SK-N-SH (cell line): ENCODE measurements at regions of chr16 and their contacts with region 1.

Region 1: DNA sequence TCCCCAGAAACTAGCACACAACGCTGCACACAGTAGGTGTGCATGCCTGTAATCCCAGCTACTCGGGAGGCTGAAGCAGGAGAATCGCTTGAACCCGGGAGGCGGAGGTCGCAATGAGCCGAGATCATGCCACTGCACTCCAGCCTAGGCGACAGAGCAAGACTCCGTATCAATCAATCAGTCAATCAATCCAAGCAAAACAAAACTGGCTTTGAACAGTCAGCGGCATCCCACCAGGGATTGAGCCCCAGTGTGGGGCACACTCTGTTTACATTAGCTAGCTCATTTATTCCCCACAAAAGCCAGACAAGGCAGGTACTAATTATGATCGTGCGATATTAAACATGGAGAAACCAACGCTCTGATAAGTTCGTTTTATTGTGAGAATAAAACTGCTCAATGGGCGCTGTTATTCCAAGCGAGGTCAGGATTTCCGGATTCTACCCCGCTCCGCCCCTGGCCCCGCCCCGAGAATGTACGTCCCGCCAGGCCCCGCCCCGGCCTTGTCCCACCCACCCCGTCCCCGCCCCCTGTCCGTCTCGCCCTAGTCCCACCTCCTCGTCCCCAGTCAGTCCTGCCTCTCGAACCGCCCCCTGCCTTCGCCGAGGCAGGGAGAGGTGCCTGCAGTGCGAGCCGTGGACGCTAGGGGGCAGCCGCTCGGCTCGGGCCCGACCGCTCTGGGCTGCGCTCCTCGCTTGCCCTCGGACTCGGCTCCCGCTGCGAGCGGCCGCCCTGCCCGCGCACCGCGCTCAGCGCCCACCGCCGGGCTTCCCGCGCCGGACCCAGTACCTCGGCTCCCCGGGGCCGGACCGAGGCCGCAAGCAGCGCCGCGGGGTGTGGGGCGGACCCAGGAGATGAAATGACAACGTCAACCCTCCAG is at the start of gene VPS4A:
- DNase-seq: peak; percentile 99
- H3K4me3 ChIP-seq: peak within 1 kb of the TSS; percentile 76 to 85
- H3K27ac ChIP-seq: peak within 1 kb of the TSS; percentile 79 to 80
- H3K4me1 ChIP-seq: peaks cover 0 to 5% of the 10 kb centered on the region in 2 experiments; a peak in 1 of 4 replicates
- H3K27me3 ChIP-seq: no peaks in the 10 kb centered on the region
- CTCF ChIP-seq: peak; percentile 66
- EP300 ChIP-seq: no peak
- RAD21 ChIP-seq: no peak
- polyA plus RNA-seq, gene VPS4A: 18.4 and 20.8 TPM in 2 replicates

Region 2: DNA sequence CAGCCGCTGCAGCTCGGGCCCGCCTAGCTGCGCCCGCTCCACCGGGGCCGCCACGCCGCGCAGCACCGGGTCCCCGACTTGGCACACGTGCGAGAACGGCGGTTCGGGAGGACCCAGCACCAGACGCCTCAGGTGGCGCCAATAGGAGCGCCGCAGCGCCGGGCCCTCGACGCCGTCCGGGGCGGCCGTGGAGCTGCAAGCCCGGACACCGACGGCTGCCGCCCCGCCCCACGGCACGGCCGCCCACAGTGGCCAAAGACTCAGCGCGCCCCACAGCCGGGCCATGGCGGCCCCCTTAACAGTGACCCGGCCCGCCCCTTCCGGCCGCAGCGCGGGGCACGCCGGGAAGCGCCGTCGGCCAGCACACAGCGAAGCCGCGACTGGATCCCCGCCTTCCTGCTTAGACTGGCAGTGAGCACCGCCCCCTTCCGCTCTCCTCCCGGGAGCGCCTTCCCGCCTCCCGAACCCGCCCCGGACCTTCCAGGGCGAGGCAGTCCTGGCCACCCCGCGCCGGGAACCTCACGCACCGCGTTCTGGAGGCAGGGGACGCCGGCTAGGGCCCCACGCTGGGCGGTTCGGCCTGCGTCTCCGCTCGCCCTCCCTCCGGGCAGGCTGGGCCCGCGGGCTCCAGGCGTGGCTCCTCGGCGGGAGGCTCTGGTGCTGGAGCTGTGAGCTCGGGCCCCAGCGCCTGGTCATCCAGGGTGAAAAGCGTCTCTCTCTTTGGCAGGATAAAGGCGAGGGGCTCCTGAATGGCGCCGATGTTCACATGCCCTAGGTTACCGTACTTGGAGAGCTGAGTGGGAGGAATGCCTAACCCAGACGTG is 19.6 kb after region 1 on chr16 and contains the start of gene PDF:
- CTCF ChIA-PET with region 1: interaction called, 16 read pairs
- POLR2A ChIA-PET with region 1: interaction called, 5 read pairs
- DNase-seq: peak; percentile 98
- H3K4me3 ChIP-seq: peak within 1 kb of the TSS; percentile 71 to 80
- H3K27ac ChIP-seq: peak within 1 kb of the TSS; percentile 82 to 88
- H3K4me1 ChIP-seq: peaks cover 11 to 28% of the 10 kb centered on the region in 2 experiments
- H3K27me3 ChIP-seq: no peaks in the 10 kb centered on the region
- CTCF ChIP-seq: no peak
- EP300 ChIP-seq: peak in 1 of 2 experiments; percentile 29; a peak in 1 of 4 replicates
- RAD21 ChIP-seq: no peak
- polyA plus RNA-seq, gene PDF: 21.4 and 22.0 TPM in 2 replicates